Upper lobe of right lung (tissue), 1 donor: ENCODE measurements at regions of chr16 and their contacts with region 1.

Region 1: GRCh38 chr16:89507834-89508590 is at the start of gene SPG7:
- DNase-seq: peak; percentile 94
- ATAC-seq: peak; percentile 95
- H3K4me3 ChIP-seq: peak within 1 kb of the TSS; percentile 79
- H3K27ac ChIP-seq: peak within 1 kb of the TSS; percentile 96
- H3K4me1 ChIP-seq: peaks cover 37% of the 10 kb centered on the region
- H3K27me3 ChIP-seq: no peaks in the 10 kb centered on the region
- CTCF ChIP-seq: no peak
- total RNA-seq, gene SPG7: 95.0 TPM

Region 2: DNA sequence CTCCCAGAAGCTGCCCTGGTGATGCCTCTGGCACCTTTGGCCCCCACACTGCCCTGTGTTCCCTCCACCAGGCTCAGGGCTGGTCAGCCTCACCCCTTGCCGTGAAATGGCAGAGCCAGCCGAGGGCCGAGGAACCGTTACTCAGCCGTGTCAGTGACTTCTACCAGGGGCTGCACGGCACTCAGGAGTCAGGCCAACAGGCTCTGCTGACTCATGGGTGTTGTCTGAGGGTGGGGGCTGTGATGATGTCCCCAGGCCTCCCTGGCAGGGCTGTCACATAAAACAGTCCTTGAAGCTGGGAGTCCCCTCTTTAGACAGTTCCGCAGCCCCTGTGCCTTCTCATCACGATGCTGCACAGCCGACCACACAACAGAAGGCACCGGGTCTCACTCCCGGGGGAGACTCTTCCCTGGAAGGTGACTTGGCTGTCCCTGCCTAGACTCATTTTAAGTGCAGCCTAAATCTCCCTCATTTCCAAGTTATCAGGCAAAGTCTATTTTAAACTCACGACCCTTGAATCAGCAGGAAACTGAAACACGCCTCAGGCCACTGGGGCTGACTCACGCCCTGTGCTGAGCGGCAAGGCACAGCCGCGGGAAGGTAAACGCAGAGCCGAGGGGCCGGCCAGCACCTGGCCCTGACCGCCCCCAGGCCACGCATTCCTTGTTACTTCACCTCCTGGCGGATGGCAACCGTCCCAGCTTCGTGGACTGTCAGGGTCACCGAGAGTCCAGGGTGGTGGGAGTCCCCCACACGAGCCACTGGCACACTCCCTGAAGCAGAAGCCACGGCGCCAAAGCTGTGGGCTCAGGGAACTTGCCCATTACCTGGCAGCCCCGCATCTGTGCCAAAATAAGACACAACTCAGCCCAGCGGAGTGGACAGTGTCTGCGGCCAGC is 187.9 kb before region 1 on chr16:
- intact Hi-C with region 1: loop called (anchors 10 kb)
- DNase-seq: no peak
- ATAC-seq: peak; percentile 38
- H3K4me3 ChIP-seq: no peak overlapping the region
- H3K27ac ChIP-seq: peak overlapping the region; percentile 30
- H3K4me1 ChIP-seq: peaks cover 95% of the 10 kb centered on the region
- H3K27me3 ChIP-seq: no peaks in the 10 kb centered on the region
- CTCF ChIP-seq: no peak